Activated T-helper 1 cell treated with anti-CD3 and anti-CD28 coated beads, Interleukin-12 subunit alpha, Interleukin-12 subunit beta, Interleukin-2, Interleukin-4 antibody, amounts not matched to agents 30 ng/mL and 10 ng/mL and 1 ng/mL, durations not matched to agents 14 hours and 24 hours and 36 hours (primary cell): ENCODE measurements at regions of chr5 and their contacts with region 1.

Region 1: GRCh38 chr5:160508780-160509361 is 87.2 kb downstream of the PTTG1 start:
- DNase-seq: peak; percentile 67
- H3K4me3 Mint-ChIP-seq: peak overlapping the region; percentile 19
- H3K27ac Mint-ChIP-seq: peak overlapping the region; percentile 66
- H3K4me1 Mint-ChIP-seq: peaks cover 67% of the 10 kb centered on the region
- H3K27me3 Mint-ChIP-seq: peaks cover 5% of the 10 kb centered on the region

Region 2: GRCh38 chr5:160175438-160176218 is 333.2 kb before region 1 on chr5:
- intact Hi-C with region 1: no loop called
- DNase-seq: no peak
- H3K4me3 Mint-ChIP-seq: no peak overlapping the region
- H3K27ac Mint-ChIP-seq: no peak overlapping the region
- H3K4me1 Mint-ChIP-seq: no peaks in the 10 kb centered on the region
- H3K27me3 Mint-ChIP-seq: no peaks in the 10 kb centered on the region

Region 3: DNA sequence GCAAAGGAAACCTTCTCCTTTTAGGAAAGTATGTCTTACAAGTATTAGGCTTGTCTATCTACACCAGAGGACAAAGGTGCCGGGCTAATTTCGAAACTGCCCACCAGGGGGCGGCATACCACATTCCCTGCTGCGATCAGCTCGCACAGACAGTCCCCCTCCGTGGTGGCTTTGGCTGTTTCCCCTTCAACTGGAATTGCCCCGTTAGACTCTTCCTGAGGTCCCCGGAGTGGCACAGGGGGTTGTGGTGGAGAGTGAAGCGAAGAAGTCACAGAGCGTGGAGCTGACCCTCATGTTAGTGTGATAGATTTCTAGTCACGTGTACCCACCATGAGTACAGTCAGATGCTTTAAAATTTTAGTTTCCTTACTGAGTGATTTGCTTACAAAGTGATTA is 69.7 kb before region 1 on chr5:
- intact Hi-C with region 1: loop called (anchors 1 kb)
- DNase-seq: peak; percentile 81
- H3K4me3 Mint-ChIP-seq: peak overlapping the region; percentile 82
- H3K27ac Mint-ChIP-seq: peak overlapping the region; percentile 96
- H3K4me1 Mint-ChIP-seq: peaks cover 74% of the 10 kb centered on the region
- H3K27me3 Mint-ChIP-seq: peaks cover 5% of the 10 kb centered on the region

Region 4: GRCh38 chr5:160496334-160496733 is 12.5 kb before region 1 on chr5:
- intact Hi-C with region 1: loop called (anchors 1 kb)
- DNase-seq: no peak
- H3K4me3 Mint-ChIP-seq: no peak overlapping the region
- H3K27ac Mint-ChIP-seq: peak overlapping the region; percentile 69
- H3K4me1 Mint-ChIP-seq: peaks cover 29% of the 10 kb centered on the region
- H3K27me3 Mint-ChIP-seq: no peaks in the 10 kb centered on the region

Region 5: GRCh38 chr5:160605266-160605665 is 96.4 kb after region 1 on chr5:
- intact Hi-C with region 1: loop called (anchors 2 kb)
- DNase-seq: no peak
- H3K4me3 Mint-ChIP-seq: no peak overlapping the region
- H3K27ac Mint-ChIP-seq: no peak overlapping the region
- H3K4me1 Mint-ChIP-seq: no peaks in the 10 kb centered on the region
- H3K27me3 Mint-ChIP-seq: peaks cover 2% of the 10 kb centered on the region

Region 6: GRCh38 chr5:160843240-160843639 is 334.4 kb after region 1 on chr5:
- intact Hi-C with region 1: loop called (anchors 5 kb)
- DNase-seq: no peak
- H3K4me3 Mint-ChIP-seq: no peak overlapping the region
- H3K27ac Mint-ChIP-seq: no peak overlapping the region
- H3K4me1 Mint-ChIP-seq: no peaks in the 10 kb centered on the region
- H3K27me3 Mint-ChIP-seq: peaks cover 4% of the 10 kb centered on the region

Region 7: GRCh38 chr5:160959804-160960203 is 450.9 kb after region 1 on chr5:
- intact Hi-C with region 1: loop called (anchors 10 kb)
- DNase-seq: no peak
- H3K4me3 Mint-ChIP-seq: no peak overlapping the region
- H3K27ac Mint-ChIP-seq: no peak overlapping the region
- H3K4me1 Mint-ChIP-seq: no peaks in the 10 kb centered on the region
- H3K27me3 Mint-ChIP-seq: peaks cover 1% of the 10 kb centered on the region